Caco-2 (cell line): ENCODE measurements at regions of chr1 and their contacts with region 1.

Region 1: GRCh38 chr1:40862008-40862863 is at the start of gene CITED4:
- DNase-seq: peak; percentile 92 to 93
- H3K4me3 ChIP-seq: peak within 1 kb of the TSS; percentile 52
- H3K4me3 Mint-ChIP-seq: peak within 1 kb of the TSS; percentile 84
- H3K27ac Mint-ChIP-seq: peak within 1 kb of the TSS; percentile 94
- H3K4me1 ChIP-seq: peaks cover 29% of the 10 kb centered on the region
- H3K4me1 Mint-ChIP-seq: peaks cover 8% of the 10 kb centered on the region
- H3K27me3 ChIP-seq: no peaks in the 10 kb centered on the region
- H3K27me3 Mint-ChIP-seq: no peaks in the 10 kb centered on the region
- CTCF ChIP-seq: peak in 1 of 2 experiments; percentile 23
- total RNA-seq, gene CITED4: 17.8 and 19.5 TPM in 2 replicates

Region 2: GRCh38 chr1:40899230-40899870 is 37.1 kb after region 1 on chr1:
- CTCF ChIA-PET with region 1: no interaction called
- POLR2A ChIA-PET with region 1: no interaction called
- intact Hi-C with region 1: loop called (anchors 1 kb)
- DNase-seq: peak; percentile 66 to 85
- H3K4me3 ChIP-seq: no peak overlapping the region
- H3K4me3 Mint-ChIP-seq: no peak overlapping the region
- H3K27ac Mint-ChIP-seq: peak overlapping the region; percentile 67
- H3K4me1 ChIP-seq: peaks cover 26% of the 10 kb centered on the region
- H3K4me1 Mint-ChIP-seq: peaks cover 13% of the 10 kb centered on the region
- H3K27me3 ChIP-seq: no peaks in the 10 kb centered on the region
- H3K27me3 Mint-ChIP-seq: no peaks in the 10 kb centered on the region
- CTCF ChIP-seq: no peak

Region 3: DNA sequence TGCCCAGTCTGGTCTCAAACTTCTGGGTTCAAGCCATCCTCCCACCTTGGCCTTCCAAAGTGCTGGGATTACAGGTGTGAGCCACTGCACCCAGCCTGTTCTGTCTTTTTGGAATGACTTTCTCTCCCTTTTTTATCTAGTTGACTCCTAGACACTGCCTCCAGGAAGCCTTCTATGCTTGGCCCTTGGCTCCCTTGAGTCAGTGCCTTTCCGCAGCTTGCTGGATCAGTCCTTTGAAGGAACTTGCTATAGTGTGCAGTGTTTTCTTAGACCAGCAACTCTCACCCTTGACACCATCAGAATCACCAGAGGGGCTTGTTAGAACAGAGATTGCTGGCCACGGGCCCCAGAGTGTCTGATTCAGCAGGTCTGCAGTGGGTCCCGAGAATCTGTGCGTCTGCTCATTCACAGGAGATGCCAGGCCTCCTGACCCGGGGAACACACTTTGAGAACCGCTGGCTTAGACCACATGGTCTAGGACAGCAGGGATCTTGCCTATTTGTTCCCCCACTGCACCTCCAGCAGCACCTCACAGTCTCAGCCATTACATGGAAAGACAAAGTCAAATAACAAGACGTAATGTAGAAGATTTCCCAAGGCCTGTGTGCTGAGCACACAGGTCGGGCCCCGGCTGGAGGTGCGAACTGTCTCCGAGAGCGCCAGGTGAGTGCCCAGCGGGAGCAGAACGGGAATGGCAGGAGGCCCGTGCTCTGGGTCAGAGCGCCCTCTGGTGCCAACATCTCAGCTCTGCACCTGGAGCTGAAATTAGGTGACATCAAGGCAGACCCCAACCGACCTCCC is 89.9 kb after region 1 on chr1:
- CTCF ChIA-PET with region 1: interaction called, 35 read pairs
- POLR2A ChIA-PET with region 1: interaction called, 10 read pairs
- intact Hi-C with region 1: loop called (anchors 1 kb)
- DNase-seq: peak; percentile 73 to 79
- H3K4me3 ChIP-seq: no peak overlapping the region
- H3K4me3 Mint-ChIP-seq: no peak overlapping the region
- H3K27ac Mint-ChIP-seq: no peak overlapping the region
- H3K4me1 ChIP-seq: peaks cover 7% of the 10 kb centered on the region; the same call in 1 of the 2 replicates
- H3K4me1 Mint-ChIP-seq: peaks cover 18% of the 10 kb centered on the region
- H3K27me3 ChIP-seq: no peaks in the 10 kb centered on the region
- H3K27me3 Mint-ChIP-seq: no peaks in the 10 kb centered on the region
- CTCF ChIP-seq: peak; percentile 78 to 87

Region 4: GRCh38 chr1:40979233-40980067 is 117.2 kb after region 1 on chr1 and contains the start of gene CTPS1:
- CTCF ChIA-PET with region 1: no interaction called
- POLR2A ChIA-PET with region 1: interaction called, 15 read pairs
- intact Hi-C with region 1: loop called (anchors 1 kb)
- DNase-seq: peak; percentile 91 to 92
- H3K4me3 ChIP-seq: peak within 1 kb of the TSS; percentile 46
- H3K4me3 Mint-ChIP-seq: peak within 1 kb of the TSS; percentile 94
- H3K27ac Mint-ChIP-seq: peak within 1 kb of the TSS; percentile 93
- H3K4me1 ChIP-seq: peaks cover 70% of the 10 kb centered on the region
- H3K4me1 Mint-ChIP-seq: peaks cover 44% of the 10 kb centered on the region
- H3K27me3 ChIP-seq: no peaks in the 10 kb centered on the region
- H3K27me3 Mint-ChIP-seq: no peaks in the 10 kb centered on the region
- CTCF ChIP-seq: no peak
- total RNA-seq, gene CTPS1: 63.1 and 63.7 TPM in 2 replicates

Region 5: DNA sequence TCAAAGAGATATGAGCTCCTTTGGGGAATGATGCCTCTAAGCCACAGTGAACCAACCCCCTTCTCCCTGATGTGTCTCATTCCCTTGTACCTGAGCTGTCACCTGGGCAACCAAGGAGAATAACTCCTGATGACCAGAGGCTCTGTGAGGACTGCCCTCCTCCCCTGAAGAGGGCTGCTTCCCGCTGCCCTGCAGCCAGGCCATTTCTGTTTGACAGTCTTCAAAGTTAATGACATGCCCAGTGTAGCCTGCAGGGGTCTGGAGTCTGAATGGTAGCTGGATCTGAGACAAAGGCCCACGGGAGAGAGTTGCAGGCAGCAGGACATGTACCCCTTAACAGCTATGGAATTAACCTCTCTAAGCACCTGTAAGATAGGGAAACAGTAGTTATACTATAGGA is 162.7 kb after region 1 on chr1:
- CTCF ChIA-PET with region 1: no interaction called
- POLR2A ChIA-PET with region 1: no interaction called
- intact Hi-C with region 1: no loop called
- DNase-seq: no peak
- H3K4me3 ChIP-seq: no peak overlapping the region
- H3K4me3 Mint-ChIP-seq: no peak overlapping the region
- H3K27ac Mint-ChIP-seq: peak overlapping the region; percentile 50
- H3K4me1 ChIP-seq: no peaks in the 10 kb centered on the region
- H3K4me1 Mint-ChIP-seq: peaks cover 7% of the 10 kb centered on the region
- H3K27me3 ChIP-seq: no peaks in the 10 kb centered on the region
- H3K27me3 Mint-ChIP-seq: no peaks in the 10 kb centered on the region
- CTCF ChIP-seq: no peak